Body of pancreas (tissue), 4 donors: ENCODE measurements at regions of chr10 and their contacts with region 1.

Region 1: DNA sequence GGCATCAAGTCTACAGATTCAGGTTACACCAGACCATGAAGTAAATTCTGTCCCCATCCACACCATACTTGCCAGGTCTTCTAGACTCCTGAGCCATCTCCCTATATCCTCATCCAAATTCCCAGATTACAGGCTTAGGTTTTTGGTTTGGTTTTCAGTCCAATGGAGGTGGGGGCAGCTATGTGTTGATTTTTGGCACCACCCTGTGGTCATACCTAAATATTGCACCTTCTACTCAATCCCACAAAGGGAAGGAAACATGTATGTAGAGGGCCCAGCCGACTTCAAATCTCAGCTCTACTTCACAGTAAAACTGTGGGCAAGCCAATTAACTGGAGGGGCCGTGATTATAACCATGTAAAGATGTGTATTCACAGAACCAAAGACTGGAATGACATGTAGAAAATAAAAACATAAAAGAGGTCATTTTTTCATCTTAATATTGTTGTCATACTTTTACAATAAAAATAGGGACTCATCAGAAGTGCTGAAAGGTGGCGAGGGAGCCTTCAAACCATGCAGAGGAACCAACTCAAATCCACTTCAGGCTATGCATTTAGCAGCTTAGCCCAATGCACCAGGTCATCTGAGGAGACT is 19.8 kb downstream of the ERCC6 start:
- DNase-seq: peak; percentile 32 to 46 (median 34)
- ATAC-seq: peak; percentile 47
- H3K4me3 ChIP-seq: no peak overlapping the region
- H3K27ac ChIP-seq: no peak overlapping the region
- H3K4me1 ChIP-seq: peaks cover 11% of the 10 kb centered on the region
- H3K27me3 ChIP-seq: no peaks in the 10 kb centered on the region
- CTCF ChIP-seq: peak; percentile 22 to 68 (median 61)
- POLR2A ChIP-seq: no peak

Region 2: DNA sequence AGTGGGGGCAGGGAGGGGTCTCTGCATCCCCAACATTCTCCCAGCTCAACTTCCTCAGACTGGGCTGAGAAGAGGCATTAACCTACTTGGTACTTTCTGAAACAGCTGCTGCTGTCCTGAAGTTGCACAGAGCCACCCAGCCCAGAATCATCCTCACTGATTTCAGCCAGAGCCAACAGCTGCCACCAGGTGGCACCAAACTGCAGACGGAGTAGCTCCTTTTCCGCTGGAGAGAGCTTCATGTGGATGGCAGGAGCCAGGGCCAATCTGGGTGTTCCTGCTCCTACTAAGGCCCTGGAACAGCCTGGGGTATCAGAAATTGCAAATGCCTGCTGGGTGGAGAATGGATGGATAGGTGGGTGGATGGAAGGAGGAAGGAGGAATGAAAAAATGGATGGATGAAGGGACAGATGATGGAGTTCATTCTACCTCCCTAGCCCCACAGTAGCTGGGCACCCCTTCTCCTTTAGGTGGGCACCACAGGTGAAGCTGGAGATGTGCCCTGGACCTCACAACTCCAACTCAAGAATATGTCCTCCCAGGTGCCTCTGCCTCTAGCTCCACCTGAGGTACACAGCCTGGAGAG is 111.4 kb before region 1 on chr10:
- intact Hi-C with region 1: loop called (anchors 5 kb)
- DNase-seq: peak; percentile 84 to 91 (median 87)
- ATAC-seq: peak; percentile 62
- H3K4me3 ChIP-seq: no peak overlapping the region
- H3K27ac ChIP-seq: peak overlapping the region in 1 of 4 donors; percentile 24
- H3K4me1 ChIP-seq: peaks cover 48% of the 10 kb centered on the region
- H3K27me3 ChIP-seq: no peaks in the 10 kb centered on the region
- CTCF ChIP-seq: peak; percentile 77 to 93 (median 90)
- POLR2A ChIP-seq: no peak